Calu3 (cell line): ENCODE measurements at regions of chr19 and their contacts with region 1.

Region 1: GRCh38 chr19:43765109-43765876 is 10.5 kb upstream of the SMG9 start:
- DNase-seq: peak; percentile 77
- H3K4me3 Mint-ChIP-seq: no peak overlapping the region
- H3K27ac Mint-ChIP-seq: peak overlapping the region; percentile 55
- H3K4me1 Mint-ChIP-seq: peaks cover 50% of the 10 kb centered on the region
- H3K27me3 Mint-ChIP-seq: no peaks in the 10 kb centered on the region
- CTCF ChIP-seq: no peak

Region 2: GRCh38 chr19:43777163-43777700 is 11.9 kb after region 1 on chr19:
- CTCF ChIA-PET with region 1: interaction called, 27 read pairs
- intact Hi-C with region 1: no loop called
- DNase-seq: peak; percentile 73
- H3K4me3 Mint-ChIP-seq: peak overlapping the region; percentile 77
- H3K27ac Mint-ChIP-seq: peak overlapping the region; percentile 98
- H3K4me1 Mint-ChIP-seq: peaks cover 65% of the 10 kb centered on the region
- H3K27me3 Mint-ChIP-seq: no peaks in the 10 kb centered on the region
- CTCF ChIP-seq: no peak

Region 3: DNA sequence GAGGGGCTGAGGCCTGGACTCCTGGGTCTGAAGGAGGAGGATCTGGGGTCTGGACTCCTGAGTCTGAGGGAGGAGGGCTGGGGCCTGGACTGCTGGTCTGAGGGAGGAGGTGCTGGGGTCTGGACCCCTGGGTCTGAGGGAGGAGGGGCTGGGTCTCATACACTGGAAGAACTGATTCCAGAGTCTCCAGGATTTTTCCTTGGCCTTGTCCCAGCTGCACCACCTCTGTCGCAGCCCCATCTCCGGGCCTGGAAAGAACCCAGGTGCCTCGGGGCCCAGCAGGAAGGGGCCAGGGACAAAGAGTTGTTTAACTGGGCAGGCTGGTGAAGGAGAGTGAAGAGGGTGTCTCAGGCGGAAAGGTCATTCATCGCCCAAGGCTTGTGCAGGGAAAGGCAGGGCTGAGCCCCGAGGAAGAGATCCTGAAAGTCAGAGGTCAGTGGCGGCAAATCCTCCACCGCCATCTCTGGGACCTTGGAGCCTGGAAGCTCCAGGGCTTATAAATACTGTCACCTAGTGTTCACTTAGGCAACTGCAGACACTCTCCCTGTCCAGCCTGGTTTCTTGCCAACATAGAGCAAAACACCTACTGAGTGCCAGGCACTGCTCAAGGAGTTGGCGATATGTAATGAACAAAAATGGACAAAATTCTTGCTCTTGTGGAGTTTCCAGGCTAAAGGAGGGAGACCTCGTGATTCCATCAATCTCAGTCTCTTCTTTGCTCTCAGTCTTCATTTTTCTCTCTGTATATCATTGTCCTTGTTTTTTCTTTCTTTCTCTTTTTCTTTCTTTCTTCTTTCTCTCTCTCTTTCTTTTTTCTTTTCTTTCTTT is 19.9 kb after region 1 on chr19:
- CTCF ChIA-PET with region 1: interaction called, 27 read pairs
- intact Hi-C with region 1: loop called (anchors 2 kb)
- DNase-seq: peak; percentile 81
- H3K4me3 Mint-ChIP-seq: peak overlapping the region; percentile 10
- H3K27ac Mint-ChIP-seq: peak overlapping the region; percentile 61
- H3K4me1 Mint-ChIP-seq: peaks cover 55% of the 10 kb centered on the region
- H3K27me3 Mint-ChIP-seq: no peaks in the 10 kb centered on the region
- CTCF ChIP-seq: peak; percentile 97